Psoas muscle (tissue), 8 donors: ENCODE measurements at regions of chr15 and their contacts with region 1.

Region 1: GRCh38 chr15:93200081-93200836 is 111.2 kb upstream of the RGMA start:
- DNase-seq: peak in 1 of 2 donors; percentile 64
- ATAC-seq: peak in 1 of 4 donors; percentile 27
- H3K4me3 ChIP-seq: no peak overlapping the region
- H3K27ac ChIP-seq: no peak overlapping the region
- H3K4me1 ChIP-seq: peaks cover 13% of the 10 kb centered on the region
- H3K27me3 ChIP-seq: no peaks in the 10 kb centered on the region
- CTCF ChIP-seq: no peak

Region 2: DNA sequence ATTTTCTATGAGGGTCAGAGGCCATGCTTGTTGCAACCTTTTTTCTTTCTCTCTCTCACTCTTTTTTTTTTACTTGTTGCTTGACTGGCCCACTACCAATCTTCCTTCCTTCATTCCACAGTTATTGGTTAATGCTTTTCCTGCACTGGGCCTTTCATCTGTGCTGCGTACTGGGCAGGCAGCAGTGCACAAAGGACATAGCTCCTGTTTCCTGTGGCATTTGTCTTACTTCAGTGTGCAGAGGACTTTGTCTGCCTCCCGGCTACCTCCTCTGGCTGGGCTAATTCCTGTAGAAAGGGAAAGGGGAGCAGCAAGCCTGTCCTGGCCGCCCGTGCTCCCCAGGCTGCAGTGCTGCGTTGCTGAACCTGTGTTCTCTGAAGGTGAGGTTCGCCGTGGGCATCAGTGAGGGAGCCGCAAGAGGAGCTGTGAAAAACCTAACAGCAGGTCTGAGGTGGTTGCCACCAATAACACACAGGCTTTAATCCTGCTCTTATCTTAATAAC is 17.5 kb before region 1 on chr15:
- intact Hi-C with region 1: loop called in 1 of 2 experiments (anchors 2 kb)
- DNase-seq: no peak
- ATAC-seq: no peak
- H3K4me3 ChIP-seq: no peak overlapping the region
- H3K27ac ChIP-seq: no peak overlapping the region
- H3K4me1 ChIP-seq: no peaks in the 10 kb centered on the region
- H3K27me3 ChIP-seq: no peaks in the 10 kb centered on the region
- CTCF ChIP-seq: no peak